ENCODE measurements at regions of chr4 and their contacts with region 1.

Region 1: GRCh38 chr4:42568610-42569207 is 88.2 kb downstream of the ATP8A1 start:
- DNase-seq: peak in 1 of 2 donors; percentile 73
- ATAC-seq: peak in 7 of 8 donors; percentile 75 to 90 (median 82)
- H3K4me3 ChIP-seq: no peak overlapping the region
- H3K27ac ChIP-seq: no peak overlapping the region
- H3K4me1 ChIP-seq: peaks cover 0 to 18% (median 7%) of the 10 kb centered on the region in 9 donors
- H3K27me3 ChIP-seq: no peaks in the 10 kb centered on the region
- CTCF ChIP-seq: peak; percentile 49 to 85 (median 75)

Region 2: GRCh38 chr4:42554072-42554471 is 14.6 kb before region 1 on chr4:
- intact Hi-C with region 1: no loop called
- DNase-seq: no peak
- ATAC-seq: no peak
- H3K4me3 ChIP-seq: no peak overlapping the region
- H3K27ac ChIP-seq: no peak overlapping the region
- H3K4me1 ChIP-seq: no peaks in the 10 kb centered on the region
- H3K27me3 ChIP-seq: no peaks in the 10 kb centered on the region
- CTCF ChIP-seq: no peak

Region 3: DNA sequence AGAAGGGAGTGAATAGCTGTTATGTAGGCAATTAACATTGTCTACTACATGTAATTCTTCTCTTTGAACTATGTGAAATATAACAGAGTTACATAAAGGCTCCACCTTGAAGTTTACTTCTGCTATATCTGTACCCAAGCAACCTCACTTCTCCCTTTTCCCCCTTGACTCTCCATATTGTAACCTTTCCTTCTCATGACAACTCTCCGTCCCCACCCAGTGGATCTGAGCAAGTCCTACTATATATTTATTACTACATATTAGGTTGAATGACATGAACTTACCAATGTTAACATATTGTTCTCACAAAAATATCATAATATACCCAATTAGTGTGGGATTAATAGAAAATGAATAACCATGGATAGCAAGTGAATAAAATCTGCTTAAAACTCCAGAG is 181.4 kb after region 1 on chr4:
- intact Hi-C with region 1: loop called in 9 of 10 experiments (anchors 1 to 10 kb)
- DNase-seq: peak in 1 of 2 donors; percentile 16
- ATAC-seq: peak in 4 of 8 donors; percentile 64 to 77 (median 71)
- H3K4me3 ChIP-seq: no peak overlapping the region
- H3K27ac ChIP-seq: no peak overlapping the region
- H3K4me1 ChIP-seq: no peaks in the 10 kb centered on the region
- H3K27me3 ChIP-seq: no peaks in the 10 kb centered on the region
- CTCF ChIP-seq: peak in 8 of 9 donors; percentile 33 to 62 (median 47)

Region 4: DNA sequence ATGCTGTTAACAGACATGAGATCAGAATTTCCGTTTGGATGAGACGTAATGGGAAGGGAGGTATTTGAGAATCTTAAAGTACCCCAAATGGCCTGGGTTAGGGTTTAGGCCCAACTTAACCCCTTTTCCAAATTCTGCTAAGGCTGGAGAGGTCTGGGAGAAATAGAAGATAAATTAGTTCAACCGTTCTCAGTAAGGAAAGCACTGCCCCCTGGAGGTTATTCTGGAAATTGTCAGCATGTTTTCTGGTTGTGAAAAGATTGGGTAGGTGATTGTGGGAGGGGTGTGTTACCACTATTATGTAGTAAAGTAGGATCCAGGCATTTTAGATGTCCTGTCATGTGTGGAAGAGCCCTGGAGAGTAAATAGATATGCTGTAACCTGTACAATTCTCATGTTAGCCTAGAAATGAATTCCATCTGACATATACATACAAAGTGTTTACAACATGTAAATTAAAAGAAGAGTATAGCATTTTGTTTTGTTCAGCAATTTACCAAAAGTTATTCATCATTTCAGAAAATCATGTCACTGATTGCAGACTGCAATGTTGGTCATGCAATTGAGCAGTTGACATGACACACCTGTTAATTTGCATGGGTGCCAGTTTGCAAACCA is 297.0 kb after region 1 on chr4:
- intact Hi-C with region 1: loop called in 9 of 10 experiments (anchors 1 to 5 kb)
- DNase-seq: peak in 1 of 2 donors; percentile 32
- ATAC-seq: no peak
- H3K4me3 ChIP-seq: no peak overlapping the region
- H3K27ac ChIP-seq: no peak overlapping the region
- H3K4me1 ChIP-seq: no peaks in the 10 kb centered on the region
- H3K27me3 ChIP-seq: peaks cover 0 to 13% (median 5%) of the 10 kb centered on the region in 7 donors
- CTCF ChIP-seq: peak; percentile 50 to 82 (median 73)

Measured in heart right ventricle (tissue), 16 donors.